Mammary epithelial cell (primary cell): ENCODE measurements at regions of chr13 and their contacts with region 1.

Region 1: GRCh38 chr13:21297914-21298831 is 121.7 kb downstream of the MRPL57 start:
- DNase-seq: peak; percentile 93
- H3K4me3 ChIP-seq: peak overlapping the region; percentile 86 to 96 (median 90)
- H3K27ac ChIP-seq: peak overlapping the region; percentile 91
- H3K4me1 ChIP-seq: peaks cover 9% of the 10 kb centered on the region
- H3K27me3 ChIP-seq: no peaks in the 10 kb centered on the region
- CTCF ChIP-seq: peak; percentile 86 to 94

Region 2: DNA sequence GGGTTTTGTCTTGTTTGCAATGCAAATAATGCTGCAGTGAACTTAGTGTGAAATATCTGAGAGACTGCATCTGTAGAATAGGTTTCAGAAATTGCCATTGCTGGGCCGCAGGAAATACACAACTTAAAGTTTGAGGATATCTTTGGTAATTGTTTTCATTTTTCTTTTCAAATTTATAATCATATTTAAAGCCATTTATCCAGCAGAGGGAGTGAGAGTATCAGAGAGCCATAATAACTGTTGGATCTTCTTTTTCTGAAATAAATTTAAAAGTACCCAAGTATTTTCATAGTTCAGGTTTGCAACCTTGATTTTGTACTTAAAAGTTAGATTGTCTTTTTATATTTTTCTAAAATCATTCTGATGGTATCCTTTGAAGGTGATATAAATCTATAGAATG is 1240.2 kb before region 1 on chr13:
- CTCF ChIA-PET with region 1: no interaction called
- dilution Hi-C with region 1: no loop called
- in situ Hi-C with region 1: no loop called
- intact Hi-C with region 1: no loop called
- DNase-seq: no peak
- H3K4me3 ChIP-seq: no peak overlapping the region
- H3K27ac ChIP-seq: no peak overlapping the region
- H3K4me1 ChIP-seq: no peaks in the 10 kb centered on the region
- H3K27me3 ChIP-seq: no peaks in the 10 kb centered on the region
- CTCF ChIP-seq: no peak

Region 3: DNA sequence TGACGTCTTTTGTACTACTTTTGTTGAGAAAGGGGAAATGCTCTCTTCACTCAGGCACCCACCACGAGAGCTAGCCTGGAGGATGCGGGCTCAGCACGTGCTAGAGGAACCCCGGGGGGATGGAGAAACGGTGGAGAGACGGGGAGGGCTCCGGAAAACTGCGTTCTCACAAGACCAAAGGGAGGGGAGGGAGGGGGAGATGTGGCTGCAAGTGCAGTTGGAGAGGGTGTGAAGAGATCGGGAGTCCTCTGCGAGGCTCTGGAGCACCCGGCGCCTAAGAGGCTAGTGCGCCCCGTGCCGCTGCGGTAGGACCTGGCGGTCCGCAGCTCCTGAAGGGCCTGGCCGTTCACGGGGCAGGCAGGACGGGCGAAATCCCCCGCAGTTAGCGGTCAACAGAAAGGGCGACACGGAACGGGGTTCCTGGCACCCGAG is 352.2 kb before region 1 on chr13:
- CTCF ChIA-PET with region 1: no interaction called
- dilution Hi-C with region 1: no loop called
- in situ Hi-C with region 1: no loop called
- intact Hi-C with region 1: loop called (anchors 1 kb)
- DNase-seq: no peak
- H3K4me3 ChIP-seq: no peak overlapping the region
- H3K27ac ChIP-seq: no peak overlapping the region
- H3K4me1 ChIP-seq: no peaks in the 10 kb centered on the region
- H3K27me3 ChIP-seq: no peaks in the 10 kb centered on the region
- CTCF ChIP-seq: no peak

Region 4: GRCh38 chr13:21176220-21176982 is 121.8 kb before region 1 on chr13 and contains the starts of genes MRPL57 and SKA3:
- CTCF ChIA-PET with region 1: no interaction called
- dilution Hi-C with region 1: no loop called
- in situ Hi-C with region 1: no loop called
- intact Hi-C with region 1: loop called (anchors 2 kb)
- DNase-seq: peak; percentile 94
- H3K4me3 ChIP-seq: peak within 1 kb of the TSS; percentile 86 to 95 (median 90)
- H3K27ac ChIP-seq: peak within 1 kb of the TSS; percentile 80
- H3K4me1 ChIP-seq: peaks cover 7% of the 10 kb centered on the region
- H3K27me3 ChIP-seq: no peaks in the 10 kb centered on the region
- CTCF ChIP-seq: no peak
- total RNA-seq, gene MRPL57: 14.5 to 18.8 TPM
- total RNA-seq, gene SKA3: 5.0 to 14.6 TPM

Region 5: DNA sequence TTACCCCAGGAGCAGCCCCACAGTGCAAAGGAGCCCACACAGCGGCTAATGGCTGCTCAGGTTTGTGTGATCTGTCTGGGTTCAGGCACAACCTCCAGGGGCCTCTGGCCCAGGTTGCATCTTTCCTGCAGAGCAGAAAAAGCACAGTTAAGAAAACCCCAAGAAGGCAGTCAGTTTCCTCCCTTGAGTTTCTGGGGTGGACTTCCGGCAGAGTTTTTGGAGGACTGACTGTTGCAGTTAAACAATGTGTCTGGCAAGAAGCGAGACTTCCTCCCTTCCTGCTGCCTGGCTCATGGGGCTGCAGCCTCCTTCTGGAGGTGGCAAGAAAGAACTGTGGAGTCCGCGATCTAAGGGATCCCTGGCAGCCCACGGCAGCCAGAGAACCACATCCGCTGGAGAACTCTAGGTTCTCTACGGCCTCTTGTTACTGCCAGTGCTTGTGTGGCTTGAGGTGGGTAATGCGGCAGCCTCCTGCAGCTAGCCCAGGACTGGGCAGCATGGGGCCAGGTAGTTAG is 46.5 kb after region 1 on chr13:
- CTCF ChIA-PET with region 1: no interaction called
- dilution Hi-C with region 1: no loop called
- in situ Hi-C with region 1: no loop called
- intact Hi-C with region 1: no loop called
- DNase-seq: no peak
- H3K4me3 ChIP-seq: no peak overlapping the region
- H3K27ac ChIP-seq: no peak overlapping the region
- H3K4me1 ChIP-seq: no peaks in the 10 kb centered on the region
- H3K27me3 ChIP-seq: peaks cover 2% of the 10 kb centered on the region
- CTCF ChIP-seq: no peak

Region 6: DNA sequence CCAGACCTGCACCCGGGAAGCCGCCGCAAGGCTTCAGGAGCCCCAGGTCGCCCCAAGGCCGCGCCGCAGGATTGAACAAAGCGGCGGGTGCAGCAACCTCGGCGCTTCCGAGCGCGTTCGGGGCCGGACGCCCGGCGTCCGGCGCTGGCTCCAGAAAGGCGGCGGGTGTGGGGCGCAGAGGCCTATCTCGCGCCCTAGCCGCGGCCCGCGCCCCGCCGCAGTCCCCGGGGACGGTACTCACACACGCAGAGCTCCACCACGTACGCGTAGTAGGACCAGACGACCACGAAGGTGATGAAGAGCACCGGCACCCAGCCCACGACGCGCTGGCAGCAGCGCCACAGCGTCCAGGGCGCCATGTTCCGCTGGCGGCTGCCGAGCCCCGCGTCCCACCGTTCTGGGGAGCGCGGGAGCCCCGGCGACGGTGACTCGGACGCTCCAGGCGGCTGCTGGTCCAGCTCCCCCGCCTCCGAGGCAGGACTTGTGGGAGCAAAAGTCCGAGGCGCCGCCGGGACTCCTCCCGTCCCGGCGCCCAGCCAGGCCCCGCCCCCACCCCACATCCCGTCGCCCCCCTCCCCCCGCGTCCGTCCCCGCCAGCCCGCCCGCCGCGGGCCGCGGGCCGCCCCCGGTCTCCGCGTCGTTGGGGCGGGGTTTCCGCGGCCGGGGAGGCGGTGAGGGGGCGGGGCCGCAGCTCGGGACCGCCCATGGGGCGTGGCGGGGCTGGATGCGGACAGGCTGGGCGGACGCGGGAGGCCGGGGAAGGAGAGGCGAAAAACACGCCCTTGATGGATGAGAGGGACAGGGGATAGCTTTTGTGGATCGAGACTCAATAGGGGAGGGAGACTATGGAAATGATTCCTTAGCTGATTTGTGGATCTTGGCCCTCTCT is 160.9 kb after region 1 on chr13 and contains the start of gene ZDHHC20:
- CTCF ChIA-PET with region 1: no interaction called
- dilution Hi-C with region 1: no loop called
- in situ Hi-C with region 1: no loop called
- intact Hi-C with region 1: loop called (anchors 1 kb)
- DNase-seq: peak; percentile 78
- H3K4me3 ChIP-seq: peak within 1 kb of the TSS; percentile 92 to 99 (median 95)
- H3K27ac ChIP-seq: peak within 1 kb of the TSS; percentile 70
- H3K4me1 ChIP-seq: peaks cover 3% of the 10 kb centered on the region
- H3K27me3 ChIP-seq: no peaks in the 10 kb centered on the region
- CTCF ChIP-seq: no peak
- total RNA-seq, gene ZDHHC20: 53.7 to 68.3 TPM

Region 7: GRCh38 chr13:21557995-21558394 is 259.8 kb after region 1 on chr13:
- CTCF ChIA-PET with region 1: no interaction called
- dilution Hi-C with region 1: no loop called
- in situ Hi-C with region 1: no loop called
- intact Hi-C with region 1: loop called (anchors 1 kb)
- DNase-seq: peak; percentile 22
- H3K4me3 ChIP-seq: no peak overlapping the region
- H3K27ac ChIP-seq: no peak overlapping the region
- H3K4me1 ChIP-seq: no peaks in the 10 kb centered on the region
- H3K27me3 ChIP-seq: no peaks in the 10 kb centered on the region
- CTCF ChIP-seq: peak; percentile 52 to 54